Activated B cell treated with CpG ODN at 0.5 μM for 24 hours (primary cell): ENCODE measurements at regions of chr3 and their contacts with region 1.

Region 1: DNA sequence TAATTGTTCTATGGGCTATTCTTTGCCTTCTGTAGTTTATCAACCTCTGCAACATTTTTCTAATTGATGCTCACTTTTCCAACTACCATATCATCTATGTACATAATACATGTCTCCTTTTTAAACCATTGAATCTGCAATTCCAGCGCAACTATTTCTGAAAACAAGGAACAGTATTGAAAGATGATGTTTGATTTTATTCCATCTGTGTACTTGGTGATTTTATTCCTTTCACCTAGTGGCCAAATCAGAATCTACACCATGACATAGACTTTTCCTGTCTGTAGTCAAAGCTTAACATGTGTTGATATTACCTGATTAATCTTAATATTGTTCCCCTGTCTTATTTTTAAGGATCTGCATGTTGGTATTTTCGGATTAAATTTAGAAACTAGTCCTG is 13.0 kb downstream of the NKTR start:
- DNase-seq: no peak
- ATAC-seq: peak; percentile 44
- H3K4me3 Mint-ChIP-seq: no peak overlapping the region
- H3K27ac Mint-ChIP-seq: peak overlapping the region; percentile 67
- H3K4me1 Mint-ChIP-seq: peaks cover 41% of the 10 kb centered on the region
- H3K27me3 Mint-ChIP-seq: no peaks in the 10 kb centered on the region
- CTCF ChIP-seq: no peak

Region 2: DNA sequence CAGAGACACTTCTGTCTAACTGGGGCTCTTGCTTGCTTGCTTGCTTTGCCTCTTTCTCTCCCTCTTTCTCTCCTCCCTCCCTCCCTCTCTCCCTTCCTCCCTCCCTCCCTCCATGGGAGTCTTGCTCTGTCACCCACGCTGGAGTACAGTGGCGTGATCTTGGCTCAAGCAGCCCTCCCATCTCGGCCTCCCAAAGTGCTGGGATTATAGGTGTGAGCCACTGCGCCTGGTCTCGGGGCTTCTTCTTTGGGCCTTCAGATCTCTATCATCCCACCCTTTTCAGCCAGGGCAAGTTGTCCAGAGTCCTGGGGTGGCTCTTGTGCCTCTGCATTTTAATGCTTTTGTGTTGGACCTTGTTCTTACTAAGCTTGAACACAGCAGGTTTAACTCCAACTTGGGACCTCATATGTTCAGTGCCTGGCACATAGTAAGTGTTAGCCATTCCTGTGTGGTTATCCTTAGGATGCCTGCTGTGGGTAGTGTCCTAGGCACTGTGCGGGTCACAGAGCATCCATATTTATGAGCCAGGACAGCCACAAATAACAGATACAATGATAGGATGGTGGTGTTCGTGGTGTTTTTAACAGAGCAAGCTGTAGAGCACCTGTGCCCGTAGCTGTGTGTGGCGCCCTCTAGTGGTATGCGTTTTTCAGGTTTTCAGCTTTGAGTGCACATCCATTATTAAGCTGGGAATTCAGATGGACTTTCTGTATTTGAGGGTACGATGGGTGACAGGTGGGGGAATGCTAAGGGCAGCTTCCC is 422.6 kb before region 1 on chr3:
- CTCF ChIA-PET with region 1: no interaction called
- POLR2A ChIA-PET with region 1: no interaction called
- intact Hi-C with region 1: no loop called
- DNase-seq: peak; percentile 40
- ATAC-seq: peak; percentile 52
- H3K4me3 Mint-ChIP-seq: peak overlapping the region; percentile 28
- H3K27ac Mint-ChIP-seq: peak overlapping the region; percentile 63
- H3K4me1 Mint-ChIP-seq: peaks cover 44% of the 10 kb centered on the region
- H3K27me3 Mint-ChIP-seq: no peaks in the 10 kb centered on the region
- CTCF ChIP-seq: peak; percentile 51

Region 3: DNA sequence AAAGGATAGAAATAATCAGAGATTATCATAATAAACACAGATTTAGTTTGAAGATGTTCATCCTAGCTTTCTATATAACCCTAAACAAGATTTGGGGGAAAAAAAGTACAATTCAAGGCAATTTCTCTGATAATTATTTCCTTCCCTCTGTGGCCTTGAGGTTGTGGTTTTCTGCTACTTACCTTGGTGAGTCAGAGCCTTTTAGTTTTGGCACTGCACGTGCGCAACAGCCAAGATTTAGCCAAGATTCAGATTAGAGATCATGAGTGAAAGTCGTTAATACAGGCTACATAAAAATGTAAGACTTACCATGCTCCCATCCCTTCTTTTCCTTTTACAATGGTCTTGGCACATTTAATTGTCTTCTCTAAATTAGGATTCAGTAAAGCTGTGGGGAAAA is 209.7 kb before region 1 on chr3:
- CTCF ChIA-PET with region 1: no interaction called
- POLR2A ChIA-PET with region 1: no interaction called
- intact Hi-C with region 1: no loop called
- DNase-seq: no peak
- ATAC-seq: no peak
- H3K4me3 Mint-ChIP-seq: no peak overlapping the region
- H3K27ac Mint-ChIP-seq: no peak overlapping the region
- H3K4me1 Mint-ChIP-seq: no peaks in the 10 kb centered on the region
- H3K27me3 Mint-ChIP-seq: peaks cover 7% of the 10 kb centered on the region
- CTCF ChIP-seq: no peak

Region 4: GRCh38 chr3:42572278-42572677 is 41.2 kb before region 1 on chr3:
- CTCF ChIA-PET with region 1: interaction called, 5 read pairs
- POLR2A ChIA-PET with region 1: no interaction called
- intact Hi-C with region 1: loop called (anchors 2 kb)
- DNase-seq: no peak
- ATAC-seq: no peak
- H3K4me3 Mint-ChIP-seq: no peak overlapping the region
- H3K27ac Mint-ChIP-seq: no peak overlapping the region
- H3K4me1 Mint-ChIP-seq: peaks cover 4% of the 10 kb centered on the region
- H3K27me3 Mint-ChIP-seq: no peaks in the 10 kb centered on the region
- CTCF ChIP-seq: no peak

Region 5: DNA sequence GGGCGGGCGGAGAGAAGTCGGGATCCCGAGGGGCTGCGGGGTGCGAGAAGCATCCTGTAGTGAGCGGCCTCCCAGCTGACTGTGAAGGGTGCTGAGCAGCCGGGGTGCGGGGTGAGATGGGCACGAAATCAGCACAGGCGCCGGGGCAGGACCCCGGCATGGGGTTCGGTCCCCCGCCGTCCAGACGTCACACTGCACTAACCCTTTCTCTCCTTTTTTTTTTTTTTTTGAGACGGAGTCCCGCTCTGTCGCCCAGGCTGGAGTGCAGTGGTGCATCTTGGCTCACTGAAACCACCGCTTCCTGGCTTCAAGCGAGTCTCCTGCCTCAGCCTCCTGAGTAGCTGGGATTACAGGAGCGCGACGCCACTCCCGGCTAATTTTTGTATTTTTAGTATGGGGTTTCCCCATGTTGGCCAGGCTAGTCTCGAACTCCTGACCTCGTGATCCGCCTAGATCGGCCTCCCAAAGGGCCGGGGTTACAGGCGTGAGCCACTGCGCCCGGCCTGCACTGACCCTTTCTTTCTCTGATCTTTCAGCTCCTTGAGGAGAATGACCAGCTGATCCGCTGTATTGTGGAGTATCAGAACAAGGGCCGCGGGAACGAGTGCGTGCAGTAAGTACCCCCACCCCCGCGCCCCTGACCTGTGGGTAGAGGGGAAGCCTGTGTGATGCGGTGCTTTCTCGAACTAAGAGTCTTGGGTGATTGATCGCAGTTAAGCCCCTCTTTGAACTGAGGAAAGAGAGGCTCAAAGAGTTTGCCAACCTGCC is 22.3 kb before region 1 on chr3:
- CTCF ChIA-PET with region 1: interaction called, 3 read pairs
- POLR2A ChIA-PET with region 1: interaction called, 9 read pairs
- intact Hi-C with region 1: loop called (anchors 1 kb)
- DNase-seq: no peak
- ATAC-seq: peak; percentile 26
- H3K4me3 Mint-ChIP-seq: peak overlapping the region; percentile 93
- H3K27ac Mint-ChIP-seq: peak overlapping the region; percentile 95
- H3K4me1 Mint-ChIP-seq: peaks cover 26% of the 10 kb centered on the region
- H3K27me3 Mint-ChIP-seq: no peaks in the 10 kb centered on the region
- CTCF ChIP-seq: no peak

Region 6: GRCh38 chr3:42600111-42600988 is 13.1 kb before region 1 on chr3 and contains the start of gene NKTR:
- CTCF ChIA-PET with region 1: interaction called, 10 read pairs
- POLR2A ChIA-PET with region 1: interaction called, 14 read pairs
- intact Hi-C with region 1: loop called (anchors 1 kb)
- DNase-seq: peak; percentile 98
- ATAC-seq: peak; percentile 92
- H3K4me3 Mint-ChIP-seq: peak within 1 kb of the TSS; percentile 91
- H3K27ac Mint-ChIP-seq: peak within 1 kb of the TSS; percentile 96
- H3K4me1 Mint-ChIP-seq: peaks cover 34% of the 10 kb centered on the region
- H3K27me3 Mint-ChIP-seq: no peaks in the 10 kb centered on the region
- CTCF ChIP-seq: no peak
- total RNA-seq, gene NKTR: 107 and 126 TPM in 2 replicates

Region 7: GRCh38 chr3:42804106-42804830 is 190.8 kb after region 1 on chr3 and contains the start of gene HIGD1A:
- CTCF ChIA-PET with region 1: no interaction called
- POLR2A ChIA-PET with region 1: no interaction called
- intact Hi-C with region 1: no loop called
- DNase-seq: peak; percentile 83
- ATAC-seq: peak; percentile 99
- H3K4me3 Mint-ChIP-seq: peak within 1 kb of the TSS; percentile 97
- H3K27ac Mint-ChIP-seq: peak within 1 kb of the TSS; percentile 87
- H3K4me1 Mint-ChIP-seq: peaks cover 41% of the 10 kb centered on the region
- H3K27me3 Mint-ChIP-seq: peaks cover 6% of the 10 kb centered on the region
- CTCF ChIP-seq: no peak
- total RNA-seq, gene HIGD1A: 35.9 and 38.2 TPM in 2 replicates

Region 8: GRCh38 chr3:43489930-43490329 is 876.5 kb after region 1 on chr3:
- CTCF ChIA-PET with region 1: no interaction called
- POLR2A ChIA-PET with region 1: no interaction called
- intact Hi-C with region 1: no loop called
- DNase-seq: no peak
- ATAC-seq: no peak
- H3K4me3 Mint-ChIP-seq: no peak overlapping the region
- H3K27ac Mint-ChIP-seq: no peak overlapping the region
- H3K4me1 Mint-ChIP-seq: no peaks in the 10 kb centered on the region
- H3K27me3 Mint-ChIP-seq: peaks cover 2% of the 10 kb centered on the region
- CTCF ChIP-seq: no peak